ENCODE measurements at regions of chr17 and their contacts with region 1.

Region 1: GRCh38 chr17:57849874-57850754 is at the start of gene MRPS23:
- DNase-seq: peak; percentile 85 to 98 (median 94)
- ATAC-seq: peak; percentile 99
- H3K4me3 ChIP-seq: peak within 1 kb of the TSS; percentile 88
- H3K4me3 Mint-ChIP-seq: peak within 1 kb of the TSS; percentile 92 to 100 (median 99)
- H3K27ac ChIP-seq: peak within 1 kb of the TSS; percentile 86
- H3K27ac Mint-ChIP-seq: peak within 1 kb of the TSS; percentile 97 to 100 (median 100)
- H3K4me1 ChIP-seq: peaks cover 20 to 27% of the 10 kb centered on the region in 2 donors
- H3K4me1 Mint-ChIP-seq: peaks cover 24 to 61% (median 49%) of the 10 kb centered on the region in 7 donors
- H3K27me3 ChIP-seq: no peaks in the 10 kb centered on the region
- H3K27me3 Mint-ChIP-seq: no peaks in the 10 kb centered on the region
- total RNA-seq, gene MRPS23: 13.0 to 40.5 (median 24.6) TPM

Region 2: GRCh38 chr17:56833809-56834379 is 1016.2 kb before region 1 on chr17 and contains the starts of genes C17orf67 and DGKE:
- CTCF ChIA-PET with region 1: no interaction called
- POLR2A ChIA-PET with region 1: no interaction called
- intact Hi-C with region 1: loop called (anchors 1 to 10 kb)
- DNase-seq: peak; percentile 95 to 100 (median 98)
- ATAC-seq: peak; percentile 97
- H3K4me3 ChIP-seq: peak within 1 kb of the TSS; percentile 91
- H3K4me3 Mint-ChIP-seq: peak within 1 kb of the TSS; percentile 91 to 98 (median 95)
- H3K27ac ChIP-seq: peak within 1 kb of the TSS; percentile 85
- H3K27ac Mint-ChIP-seq: peak within 1 kb of the TSS; percentile 83 to 95 (median 93)
- H3K4me1 ChIP-seq: peaks cover 41 to 42% of the 10 kb centered on the region in 2 donors
- H3K4me1 Mint-ChIP-seq: peaks cover 34 to 74% (median 62%) of the 10 kb centered on the region in 7 donors
- H3K27me3 ChIP-seq: no peaks in the 10 kb centered on the region
- H3K27me3 Mint-ChIP-seq: no peaks in the 10 kb centered on the region
- total RNA-seq, gene C17orf67: 3.6 to 9.1 (median 5.4) TPM
- total RNA-seq, gene DGKE: 23.7 to 39.2 (median 35.6) TPM

Region 3: GRCh38 chr17:57697891-57698711 is 152.0 kb before region 1 on chr17:
- CTCF ChIA-PET with region 1: no interaction called
- POLR2A ChIA-PET with region 1: no interaction called
- intact Hi-C with region 1: no loop called
- DNase-seq: no peak
- ATAC-seq: no peak
- H3K4me3 ChIP-seq: no peak overlapping the region
- H3K4me3 Mint-ChIP-seq: no peak overlapping the region
- H3K27ac ChIP-seq: no peak overlapping the region
- H3K27ac Mint-ChIP-seq: no peak overlapping the region
- H3K4me1 ChIP-seq: peaks cover 8 to 21% of the 10 kb centered on the region in 2 donors
- H3K4me1 Mint-ChIP-seq: peaks cover 0 to 6% (median 3%) of the 10 kb centered on the region in 7 donors
- H3K27me3 ChIP-seq: no peaks in the 10 kb centered on the region
- H3K27me3 Mint-ChIP-seq: no peaks in the 10 kb centered on the region

Region 4: DNA sequence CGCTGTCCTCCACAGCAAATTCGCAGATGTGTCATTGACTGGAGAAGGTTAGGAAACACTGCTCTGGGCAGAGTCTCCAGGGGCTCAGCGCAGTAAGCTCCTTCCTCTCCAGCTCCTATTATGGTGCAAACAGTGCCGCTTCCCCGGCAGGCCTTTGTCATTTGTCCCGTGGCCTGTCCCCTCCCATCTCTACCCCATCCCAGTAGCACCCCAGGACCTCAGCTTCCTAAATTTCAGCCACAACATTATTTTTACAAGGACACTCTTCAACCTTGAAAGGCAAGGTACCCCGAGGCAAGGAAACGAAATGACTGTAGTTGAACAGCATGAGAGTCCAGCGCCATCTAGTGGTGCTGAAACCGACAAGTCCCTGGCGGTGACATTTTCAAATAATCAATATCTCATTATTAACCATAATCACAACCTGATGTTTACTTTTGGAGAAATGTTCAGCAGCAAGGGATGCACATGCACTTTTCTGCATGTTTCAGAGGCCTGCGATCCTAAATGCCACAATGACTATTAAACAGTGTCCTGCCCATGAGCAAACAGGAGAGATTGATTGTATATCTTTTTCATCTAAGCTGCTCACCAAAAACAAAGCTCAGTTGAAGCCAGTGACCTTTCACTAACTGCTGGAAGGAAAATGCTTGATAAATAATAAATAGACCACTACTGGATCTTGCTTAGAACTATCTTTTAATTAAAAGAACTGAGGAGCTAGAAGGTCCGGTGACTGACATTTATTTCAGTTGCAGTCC is 16.8 kb before region 1 on chr17:
- CTCF ChIA-PET with region 1: interaction called, 14 read pairs
- POLR2A ChIA-PET with region 1: interaction called, 3 read pairs
- intact Hi-C with region 1: no loop called
- DNase-seq: peak; percentile 29 to 68 (median 58)
- ATAC-seq: peak; percentile 86
- H3K4me3 ChIP-seq: peak overlapping the region; percentile 29
- H3K4me3 Mint-ChIP-seq: no peak overlapping the region
- H3K27ac ChIP-seq: peak overlapping the region; percentile 8
- H3K27ac Mint-ChIP-seq: no peak overlapping the region
- H3K4me1 ChIP-seq: no peaks in the 10 kb centered on the region
- H3K4me1 Mint-ChIP-seq: peaks cover 0 to 13% (median 4%) of the 10 kb centered on the region in 7 donors
- H3K27me3 ChIP-seq: no peaks in the 10 kb centered on the region
- H3K27me3 Mint-ChIP-seq: no peaks in the 10 kb centered on the region

Region 5: DNA sequence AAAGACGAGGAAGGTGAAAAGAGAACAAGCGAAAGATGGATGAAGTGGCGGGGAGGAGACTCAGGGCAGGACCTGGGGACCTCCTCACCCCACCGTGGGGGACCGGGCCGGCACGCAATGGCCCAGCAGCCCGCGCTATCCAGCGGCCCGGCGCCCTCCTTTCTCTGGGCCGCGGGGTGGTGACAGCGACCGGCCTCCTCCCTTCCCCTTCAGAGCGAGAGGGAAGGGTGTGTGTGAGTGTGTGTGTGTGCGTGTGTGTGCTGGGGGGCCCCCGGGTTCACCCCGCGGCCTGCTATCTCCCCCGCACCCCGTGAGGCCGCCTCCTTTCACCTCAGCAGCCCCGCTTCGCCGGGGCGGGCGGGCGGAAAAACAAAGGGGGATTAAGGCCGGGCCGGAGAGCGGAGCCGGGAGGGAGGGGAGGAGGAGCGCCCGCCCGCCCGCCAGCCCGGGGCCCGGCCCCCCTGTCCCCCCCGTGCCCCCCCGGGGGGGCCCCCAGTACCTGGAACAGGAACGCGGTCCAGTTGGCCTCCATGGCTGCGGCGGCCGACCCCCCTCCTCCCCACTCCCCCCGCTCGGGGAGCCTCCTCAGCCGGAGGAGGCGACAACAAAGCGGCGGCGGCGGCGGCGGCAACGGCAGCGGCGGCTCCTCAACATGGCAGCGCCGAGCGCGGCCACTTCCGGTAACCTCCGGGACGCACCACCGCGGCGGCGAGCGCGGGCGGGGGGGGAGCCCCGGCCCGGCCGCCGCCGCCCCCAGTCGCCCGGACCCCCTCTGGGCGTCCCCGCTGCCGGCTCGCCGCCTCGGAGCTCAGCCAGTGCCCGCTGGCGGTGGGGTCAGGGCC is 137.7 kb after region 1 on chr17 and contains the start of gene VEZF1:
- CTCF ChIA-PET with region 1: interaction called, 3 read pairs
- POLR2A ChIA-PET with region 1: interaction called, 23 read pairs
- intact Hi-C with region 1: loop called (anchors 1 kb)
- DNase-seq: peak; percentile 66 to 85 (median 75)
- ATAC-seq: peak; percentile 84
- H3K4me3 ChIP-seq: peak within 1 kb of the TSS; percentile 94
- H3K4me3 Mint-ChIP-seq: peak within 1 kb of the TSS; percentile 92 to 96 (median 95)
- H3K27ac ChIP-seq: peak within 1 kb of the TSS; percentile 87
- H3K27ac Mint-ChIP-seq: peak within 1 kb of the TSS; percentile 90 to 98 (median 95)
- H3K4me1 ChIP-seq: peaks cover 39 to 45% of the 10 kb centered on the region in 2 donors
- H3K4me1 Mint-ChIP-seq: peaks cover 45 to 81% (median 75%) of the 10 kb centered on the region in 7 donors
- H3K27me3 ChIP-seq: no peaks in the 10 kb centered on the region
- H3K27me3 Mint-ChIP-seq: no peaks in the 10 kb centered on the region
- total RNA-seq, gene VEZF1: 43.2 to 81.9 (median 46.3) TPM

Region 6: DNA sequence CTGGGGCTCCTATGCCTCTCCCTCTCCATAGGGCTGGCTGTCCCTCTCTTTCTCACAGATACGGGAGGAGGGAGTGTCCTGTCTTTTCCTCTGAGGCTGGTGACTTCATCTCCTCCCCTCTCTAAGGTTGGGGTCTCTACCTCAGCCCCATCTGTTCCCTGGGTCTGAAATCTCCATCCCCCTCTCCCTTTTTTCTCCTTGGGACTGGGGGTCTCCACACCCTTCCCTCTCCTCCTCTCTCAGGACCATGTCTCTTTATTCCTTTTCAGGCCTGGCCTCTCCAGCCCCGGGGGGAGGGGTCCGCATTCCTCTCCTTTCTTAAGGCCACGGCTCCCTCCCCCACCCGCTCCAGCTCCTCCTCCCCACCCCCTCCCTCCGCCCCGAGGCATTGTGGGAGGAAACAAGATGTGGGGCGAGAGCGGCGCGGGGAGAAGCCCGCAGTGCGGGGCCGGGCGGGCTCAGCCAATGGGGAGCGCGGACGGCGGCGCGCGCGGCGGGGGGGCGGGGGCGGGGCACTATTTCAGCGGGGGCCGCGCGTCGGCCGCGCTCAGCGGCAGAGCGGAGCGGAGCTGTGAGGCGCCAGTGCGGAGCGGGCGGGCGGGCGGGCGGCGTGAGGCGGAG is 232.9 kb after region 1 on chr17 and contains the start of gene DYNLL2:
- CTCF ChIA-PET with region 1: no interaction called
- POLR2A ChIA-PET with region 1: interaction called, 4 read pairs
- intact Hi-C with region 1: loop called (anchors 1 kb)
- DNase-seq: peak; percentile 74 to 88 (median 87)
- ATAC-seq: peak; percentile 91
- H3K4me3 ChIP-seq: peak within 1 kb of the TSS; percentile 88
- H3K4me3 Mint-ChIP-seq: peak within 1 kb of the TSS; percentile 88 to 95 (median 92)
- H3K27ac ChIP-seq: peak within 1 kb of the TSS; percentile 94
- H3K27ac Mint-ChIP-seq: peak within 1 kb of the TSS; percentile 81 to 95 (median 90)
- H3K4me1 ChIP-seq: peaks cover 23 to 34% of the 10 kb centered on the region in 2 donors
- H3K4me1 Mint-ChIP-seq: peaks cover 26 to 40% (median 34%) of the 10 kb centered on the region in 7 donors
- H3K27me3 ChIP-seq: no peaks in the 10 kb centered on the region
- H3K27me3 Mint-ChIP-seq: peaks cover 0 to 31% (median 0%) of the 10 kb centered on the region in 5 donors
- total RNA-seq, gene DYNLL2: 30.1 to 39.1 (median 35.1) TPM

Region 7: DNA sequence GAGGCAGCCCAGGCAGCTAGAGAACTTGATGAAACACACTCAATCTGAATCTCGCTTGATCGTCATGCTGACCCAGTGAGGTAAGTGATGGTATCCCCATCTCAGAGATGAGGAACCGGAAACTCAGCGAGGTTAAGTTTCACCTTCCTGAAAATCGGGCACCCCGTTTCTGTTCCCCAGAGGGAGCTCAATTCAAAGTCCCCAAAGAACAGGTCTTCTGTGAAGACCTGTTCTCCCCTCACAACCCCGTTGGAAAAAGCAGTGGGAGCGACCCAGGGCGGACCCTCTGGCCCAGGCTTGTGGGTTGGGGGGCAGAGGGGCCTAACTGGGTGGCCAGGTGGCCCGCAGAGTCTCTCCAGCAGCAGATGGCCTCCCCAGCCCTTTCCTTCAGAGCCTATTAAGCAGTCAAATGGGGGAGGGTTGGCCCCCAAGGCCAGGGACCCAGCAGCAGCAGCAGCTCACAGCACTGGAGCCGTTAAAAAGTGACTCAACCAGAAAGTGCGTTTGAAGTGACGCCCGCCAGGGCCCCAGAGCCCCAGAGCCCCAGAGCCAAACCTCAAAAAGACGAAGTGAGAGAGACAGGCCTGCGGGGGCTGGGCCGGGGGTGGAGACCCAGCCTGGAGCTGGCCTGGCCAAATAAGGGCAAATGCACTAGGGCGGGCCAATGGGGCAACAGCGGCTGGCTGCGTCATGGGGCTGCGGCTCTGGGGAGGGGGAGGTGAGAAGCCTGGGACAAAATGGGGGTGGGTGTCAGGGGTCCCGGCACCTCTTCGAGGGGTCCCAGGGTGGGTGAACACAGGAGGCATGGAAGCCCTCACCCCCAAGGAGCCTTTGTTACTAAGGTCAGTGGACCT is 487.7 kb after region 1 on chr17:
- CTCF ChIA-PET with region 1: no interaction called
- POLR2A ChIA-PET with region 1: interaction called, 3 read pairs
- intact Hi-C with region 1: loop called in 1 of 2 experiments (anchors 1 kb)
- DNase-seq: peak; percentile 73 to 93 (median 85)
- ATAC-seq: peak; percentile 88
- H3K4me3 ChIP-seq: peak overlapping the region; percentile 98
- H3K4me3 Mint-ChIP-seq: peak overlapping the region; percentile 86 to 100 (median 97)
- H3K27ac ChIP-seq: peak overlapping the region; percentile 98
- H3K27ac Mint-ChIP-seq: peak overlapping the region; percentile 89 to 100 (median 95)
- H3K4me1 ChIP-seq: peaks cover 59 to 77% of the 10 kb centered on the region in 2 donors
- H3K4me1 Mint-ChIP-seq: peaks cover 52 to 90% (median 65%) of the 10 kb centered on the region in 7 donors
- H3K27me3 ChIP-seq: no peaks in the 10 kb centered on the region
- H3K27me3 Mint-ChIP-seq: no peaks in the 10 kb centered on the region

Measured in naive thymus-derived CD4-positive, alpha-beta T cell (primary cell).